IMR-90 (cell line): ENCODE measurements at regions of chr9 and their contacts with region 1.

Region 1: DNA sequence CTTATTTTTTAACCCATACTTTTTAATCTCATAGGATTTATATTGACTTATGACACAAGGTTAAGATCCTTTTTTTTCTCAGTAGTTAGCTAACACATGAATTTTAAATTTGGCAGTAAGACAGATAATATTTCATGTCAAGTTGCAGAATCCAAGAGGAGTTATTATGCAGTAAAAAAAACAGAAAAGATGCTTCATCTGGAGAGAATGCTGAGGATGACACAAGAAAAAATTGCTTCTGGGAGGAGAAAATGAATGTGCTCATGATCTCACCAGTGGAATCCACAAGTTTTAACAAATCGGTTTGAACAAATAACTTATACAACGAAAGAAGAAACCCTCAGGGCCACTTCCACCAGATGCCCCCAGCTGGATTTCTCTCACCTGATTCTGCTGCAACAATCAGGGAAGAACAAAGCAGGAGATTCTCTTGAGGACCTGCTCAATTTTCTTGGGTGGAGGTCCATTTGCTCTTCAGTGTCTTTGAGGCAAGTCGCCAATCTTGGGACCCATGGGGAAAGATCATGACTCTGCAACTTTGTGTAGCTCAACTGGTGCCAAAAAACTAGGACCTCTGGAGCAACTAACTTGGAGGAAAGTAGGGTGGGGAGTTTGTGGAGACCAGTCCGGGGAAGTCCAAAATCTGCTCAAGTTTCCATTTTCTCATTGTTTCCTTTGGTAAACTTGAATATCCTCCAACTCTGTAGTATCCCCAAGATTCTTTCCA is 50.5 kb upstream of the TNFSF15 start:
- DNase-seq: peak; percentile 82
- ATAC-seq: peak; percentile 71
- H3K4me3 ChIP-seq: no peak overlapping the region
- H3K27ac ChIP-seq: peak overlapping the region; percentile 94
- H3K4me1 ChIP-seq: peaks cover 14% of the 10 kb centered on the region
- H3K27me3 ChIP-seq: no peaks in the 10 kb centered on the region
- CTCF ChIP-seq: no peak
- POLR2A ChIP-seq: no peak
- RAD21 ChIP-seq: no peak

Region 2: GRCh38 chr9:114033397-114034103 is 822.8 kb before region 1 on chr9:
- CTCF ChIA-PET with region 1: no interaction called
- POLR2A ChIA-PET with region 1: no interaction called
- dilution Hi-C with region 1: no loop called
- in situ Hi-C with region 1: no loop called
- intact Hi-C with region 1: no loop called
- DNase-seq: no peak
- ATAC-seq: peak; percentile 57; the same call in 1 of the 2 replicates
- H3K4me3 ChIP-seq: no peak overlapping the region
- H3K27ac ChIP-seq: no peak overlapping the region
- H3K4me1 ChIP-seq: no peaks in the 10 kb centered on the region
- H3K27me3 ChIP-seq: no peaks in the 10 kb centered on the region
- CTCF ChIP-seq: peak; percentile 44
- POLR2A ChIP-seq: no peak
- RAD21 ChIP-seq: peak; percentile 72

Region 3: DNA sequence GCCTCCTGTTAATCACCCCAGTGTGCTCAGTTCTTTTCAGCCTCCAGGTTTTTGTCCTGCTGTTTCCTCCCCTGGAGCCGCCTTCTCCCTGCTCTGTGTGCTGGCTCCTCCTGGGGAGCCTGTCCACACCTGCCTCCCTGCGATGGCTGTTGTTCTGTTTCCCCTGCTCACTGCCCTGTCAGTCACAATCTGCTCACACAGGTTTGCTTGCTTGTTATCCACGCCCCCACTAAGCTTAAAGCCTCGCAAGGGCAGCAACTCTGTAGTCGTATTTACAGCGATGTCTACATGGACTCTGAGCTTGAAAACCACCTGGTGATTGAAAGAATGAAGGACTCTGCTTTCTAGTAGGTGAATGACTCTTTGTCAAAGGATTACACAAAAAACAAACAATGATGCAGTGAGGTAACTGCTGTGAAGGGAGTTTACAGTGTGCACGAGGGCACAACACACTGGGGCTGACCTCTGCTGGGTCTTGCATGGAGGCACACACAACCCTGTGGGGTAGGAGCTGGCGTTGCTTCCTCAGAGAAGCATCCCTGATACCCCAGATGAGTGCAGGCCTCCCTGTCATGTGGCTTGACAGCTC is 134.8 kb before region 1 on chr9:
- CTCF ChIA-PET with region 1: no interaction called
- POLR2A ChIA-PET with region 1: no interaction called
- dilution Hi-C with region 1: no loop called
- in situ Hi-C with region 1: no loop called
- intact Hi-C with region 1: no loop called
- DNase-seq: no peak
- ATAC-seq: no peak
- H3K4me3 ChIP-seq: no peak overlapping the region
- H3K27ac ChIP-seq: no peak overlapping the region
- H3K4me1 ChIP-seq: peaks cover 19% of the 10 kb centered on the region
- H3K27me3 ChIP-seq: peaks cover 42% of the 10 kb centered on the region
- CTCF ChIP-seq: no peak
- POLR2A ChIP-seq: no peak
- RAD21 ChIP-seq: no peak

Region 4: DNA sequence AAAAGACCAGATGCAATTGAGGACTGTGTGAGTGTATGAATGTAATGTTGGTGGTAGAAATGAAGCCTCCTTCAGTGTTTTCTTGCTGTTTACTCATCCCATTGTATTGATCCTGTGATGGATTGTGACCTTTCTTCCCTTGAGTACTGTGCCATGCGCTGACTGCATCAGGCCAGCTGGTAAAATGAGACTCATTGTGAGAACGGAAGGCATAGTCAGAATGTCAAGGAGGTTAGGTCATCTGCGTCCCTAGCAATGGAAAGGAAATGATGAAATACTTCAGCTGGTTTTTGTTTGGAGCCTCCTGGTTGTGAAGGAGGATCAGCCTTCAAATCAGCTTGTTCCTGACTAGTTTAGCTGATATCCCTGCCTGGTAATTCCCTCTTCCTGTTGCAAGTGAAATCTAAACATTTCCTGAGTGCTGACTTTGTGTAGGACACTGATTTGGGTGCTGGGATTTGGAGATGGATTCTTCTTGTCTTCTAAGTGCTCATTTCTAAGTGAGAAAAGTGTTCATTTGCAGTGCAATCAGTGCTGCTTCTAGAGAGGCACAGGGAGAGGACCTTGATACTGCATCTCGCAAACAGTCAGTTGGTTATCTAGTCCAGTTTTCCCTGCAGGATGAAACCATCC is 38.5 kb after region 1 on chr9:
- CTCF ChIA-PET with region 1: no interaction called
- POLR2A ChIA-PET with region 1: no interaction called
- dilution Hi-C with region 1: no loop called
- in situ Hi-C with region 1: no loop called
- intact Hi-C with region 1: loop called (anchors 5 kb)
- DNase-seq: peak; percentile 99
- ATAC-seq: peak; percentile 89
- H3K4me3 ChIP-seq: no peak overlapping the region
- H3K27ac ChIP-seq: peak overlapping the region; percentile 90
- H3K4me1 ChIP-seq: peaks cover 27% of the 10 kb centered on the region
- H3K27me3 ChIP-seq: no peaks in the 10 kb centered on the region
- CTCF ChIP-seq: no peak
- POLR2A ChIP-seq: no peak
- RAD21 ChIP-seq: no peak

Region 5: DNA sequence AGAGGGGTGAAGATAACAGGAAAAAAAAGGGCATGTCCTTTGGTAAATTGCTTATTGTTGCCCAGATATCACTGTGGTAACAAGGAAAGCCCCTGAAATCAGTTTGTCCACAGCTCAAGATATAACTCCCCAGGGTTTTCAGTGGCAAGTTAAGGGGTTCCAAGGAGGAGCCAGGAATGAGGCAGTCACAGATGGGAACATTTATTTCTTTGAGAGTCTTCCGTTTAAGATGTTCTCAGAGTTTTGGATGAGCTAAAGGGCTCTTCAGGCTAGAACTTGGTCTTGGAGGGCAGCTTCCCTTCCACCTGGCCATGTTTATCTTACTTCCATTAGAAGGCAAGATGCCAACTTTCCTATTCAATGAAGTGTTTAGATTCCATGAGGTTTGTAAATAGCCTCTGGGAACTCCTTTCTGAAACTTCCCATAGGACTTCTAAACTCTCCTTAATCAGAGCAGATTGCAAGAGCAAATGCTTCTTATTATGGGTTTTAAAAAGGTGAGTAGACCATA is 539.2 kb after region 1 on chr9:
- CTCF ChIA-PET with region 1: no interaction called
- POLR2A ChIA-PET with region 1: no interaction called
- dilution Hi-C with region 1: no loop called
- in situ Hi-C with region 1: no loop called
- intact Hi-C with region 1: no loop called
- DNase-seq: peak; percentile 43
- ATAC-seq: 0 out of 2 replicates have a peak, but pooled peaks have one; percentile 27
- H3K4me3 ChIP-seq: no peak overlapping the region
- H3K27ac ChIP-seq: no peak overlapping the region
- H3K4me1 ChIP-seq: peaks cover 2% of the 10 kb centered on the region
- H3K27me3 ChIP-seq: no peaks in the 10 kb centered on the region
- CTCF ChIP-seq: no peak
- POLR2A ChIP-seq: no peak
- RAD21 ChIP-seq: no peak